Activated naive CD4-positive, alpha-beta T cell treated with anti-CD3 and anti-CD28 coated beads for 36 hours (primary cell): ENCODE measurements at regions of chr4 and their contacts with region 1.

Region 1: DNA sequence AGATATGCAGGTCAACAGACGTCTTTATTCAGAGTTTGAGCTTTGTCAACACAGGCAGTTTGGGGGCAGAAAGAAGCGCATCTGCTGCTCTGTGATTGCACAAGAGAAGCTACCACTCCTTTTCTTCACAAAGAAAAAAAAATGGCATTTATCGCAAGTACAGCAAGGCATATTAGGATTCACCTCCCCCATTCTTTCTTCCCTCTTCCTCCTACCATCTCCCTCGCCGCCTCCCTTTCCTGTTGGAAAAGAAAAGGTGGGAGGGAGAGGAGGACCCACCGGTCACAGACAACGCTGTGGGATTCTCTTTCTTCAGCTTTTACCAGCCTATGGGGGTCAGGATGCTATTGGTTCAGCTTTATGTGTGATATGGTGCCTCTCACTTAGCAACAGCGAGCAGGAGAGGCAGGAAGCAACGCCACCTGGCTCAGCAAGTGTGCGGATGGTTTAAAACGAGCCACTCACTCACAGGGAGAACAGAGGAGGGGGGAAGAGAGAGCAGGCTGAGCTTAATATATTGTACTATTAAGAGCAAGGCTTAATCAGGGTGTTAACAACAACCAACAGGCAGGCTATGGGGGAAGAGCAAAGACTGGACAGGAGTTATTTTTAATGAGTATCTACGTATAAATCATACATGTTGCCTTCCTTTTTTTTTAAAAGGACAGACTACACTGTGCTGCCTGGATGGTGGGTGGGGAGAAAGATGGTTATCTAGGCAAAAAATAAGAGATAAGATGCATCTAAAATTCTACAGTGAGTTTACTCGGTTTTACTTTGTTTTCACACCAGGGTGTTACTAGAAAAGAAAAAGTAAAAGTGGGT is 104.7 kb downstream of the MAML3 start:
- DNase-seq: peak; percentile 78
- H3K4me3 Mint-ChIP-seq: peak overlapping the region; percentile 78
- H3K27ac Mint-ChIP-seq: peak overlapping the region; percentile 14
- H3K4me1 Mint-ChIP-seq: peaks cover 31% of the 10 kb centered on the region
- H3K27me3 Mint-ChIP-seq: peaks cover 2% of the 10 kb centered on the region

Region 2: GRCh38 chr4:139734875-139735380 is 314.3 kb before region 1 on chr4:
- CTCF ChIA-PET with region 1: interaction called, 5 read pairs
- intact Hi-C with region 1: loop called (anchors 1 kb)
- DNase-seq: peak; percentile 78
- H3K4me3 Mint-ChIP-seq: peak overlapping the region; percentile 61
- H3K27ac Mint-ChIP-seq: no peak overlapping the region
- H3K4me1 Mint-ChIP-seq: peaks cover 22% of the 10 kb centered on the region
- H3K27me3 Mint-ChIP-seq: peaks cover 29% of the 10 kb centered on the region

Region 3: GRCh38 chr4:140012688-140013486 is 36.3 kb before region 1 on chr4:
- CTCF ChIA-PET with region 1: interaction called, 6 read pairs
- intact Hi-C with region 1: loop called (anchors 1 kb)
- DNase-seq: peak; percentile 69
- H3K4me3 Mint-ChIP-seq: no peak overlapping the region
- H3K27ac Mint-ChIP-seq: no peak overlapping the region
- H3K4me1 Mint-ChIP-seq: peaks cover 8% of the 10 kb centered on the region
- H3K27me3 Mint-ChIP-seq: peaks cover 1% of the 10 kb centered on the region

Region 4: GRCh38 chr4:140095694-140096482 is 46.7 kb after region 1 on chr4:
- CTCF ChIA-PET with region 1: interaction called, 7 read pairs
- intact Hi-C with region 1: loop called (anchors 2 kb)
- DNase-seq: peak; percentile 91
- H3K4me3 Mint-ChIP-seq: peak overlapping the region; percentile 90
- H3K27ac Mint-ChIP-seq: peak overlapping the region; percentile 99
- H3K4me1 Mint-ChIP-seq: peaks cover 77% of the 10 kb centered on the region
- H3K27me3 Mint-ChIP-seq: no peaks in the 10 kb centered on the region

Region 5: GRCh38 chr4:140227286-140227685 is 178.1 kb after region 1 on chr4:
- CTCF ChIA-PET with region 1: no interaction called
- intact Hi-C with region 1: no loop called
- DNase-seq: no peak
- H3K4me3 Mint-ChIP-seq: no peak overlapping the region
- H3K27ac Mint-ChIP-seq: no peak overlapping the region
- H3K4me1 Mint-ChIP-seq: no peaks in the 10 kb centered on the region
- H3K27me3 Mint-ChIP-seq: no peaks in the 10 kb centered on the region

Region 6: GRCh38 chr4:140252742-140253555 is 203.7 kb after region 1 on chr4:
- CTCF ChIA-PET with region 1: interaction called, 19 read pairs
- intact Hi-C with region 1: loop called (anchors 1 kb)
- DNase-seq: peak; percentile 65
- H3K4me3 Mint-ChIP-seq: peak overlapping the region; percentile 5
- H3K27ac Mint-ChIP-seq: no peak overlapping the region
- H3K4me1 Mint-ChIP-seq: peaks cover 11% of the 10 kb centered on the region
- H3K27me3 Mint-ChIP-seq: peaks cover 6% of the 10 kb centered on the region